ENCODE measurements at regions of chr12 and their contacts with region 1.

Region 1: DNA sequence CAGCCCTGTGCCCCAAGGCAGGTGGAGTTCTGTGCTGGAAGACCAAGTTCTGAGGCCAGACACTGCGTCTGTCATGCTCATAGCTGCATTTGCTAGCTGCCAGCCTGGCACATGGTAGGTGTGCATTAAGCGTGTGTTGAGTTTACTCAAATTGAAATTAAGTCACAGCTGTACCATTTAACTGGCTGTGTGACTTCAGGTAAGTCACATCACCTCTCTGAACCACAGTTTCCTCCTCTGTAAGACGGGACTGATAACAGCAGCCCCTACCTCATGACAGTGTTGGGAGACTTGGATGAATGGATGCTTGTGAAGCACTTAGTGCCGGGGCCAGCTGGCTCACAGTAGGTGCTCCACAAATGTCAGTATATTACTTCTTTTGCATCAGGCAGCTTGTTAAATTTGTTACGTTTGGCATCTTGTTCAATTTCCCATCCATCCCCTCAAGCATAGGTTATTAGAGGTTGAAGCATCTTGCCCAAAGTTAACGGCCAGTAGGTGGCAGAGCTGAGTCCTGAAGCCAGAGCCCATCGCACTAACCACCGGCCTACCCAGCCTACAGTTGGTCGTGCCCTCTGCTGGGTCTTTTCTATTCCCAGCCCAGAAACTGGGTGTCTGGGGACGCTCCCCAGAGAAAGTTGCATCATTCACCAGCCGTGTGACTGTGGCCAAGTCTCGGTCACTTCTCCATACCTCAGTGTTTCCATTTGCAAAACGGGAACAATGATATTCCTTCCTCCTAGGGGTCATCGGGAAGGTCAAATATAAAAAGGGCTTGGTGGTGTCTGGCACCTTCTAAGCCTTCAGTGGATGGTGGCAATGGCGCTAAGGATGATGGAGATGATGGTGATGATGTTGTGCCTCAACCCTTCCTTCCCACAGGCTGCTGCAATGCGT is 4.5 kb downstream of the DAO start:
- DNase-seq: peak; percentile 72
- CTCF ChIP-seq: peak; percentile 71

Region 2: DNA sequence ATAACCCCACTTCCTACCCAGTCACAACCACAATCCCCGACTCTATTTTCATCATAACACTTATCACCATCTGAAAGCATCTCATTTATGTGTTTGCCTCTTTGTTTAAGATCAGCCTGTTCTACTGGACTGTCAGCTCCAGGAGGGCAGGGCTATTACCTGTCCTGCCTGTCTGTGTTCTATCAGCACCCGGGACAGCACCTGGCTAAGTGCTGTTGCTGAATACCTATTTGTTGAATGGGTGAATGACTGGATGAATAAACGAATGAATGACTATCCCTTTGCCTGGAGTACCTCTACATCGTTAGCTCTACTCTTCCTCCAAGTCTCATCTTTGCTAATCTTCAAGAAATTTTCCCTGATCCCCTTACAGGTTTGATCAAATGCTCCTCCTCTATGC is 686.3 kb before region 1 on chr12:
- CTCF ChIA-PET with region 1: no interaction called
- POLR2A ChIA-PET with region 1: no interaction called
- DNase-seq: no peak
- CTCF ChIP-seq: no peak

Region 3: GRCh38 chr12:108861878-108862587 is 22.3 kb before region 1 on chr12:
- CTCF ChIA-PET with region 1: interaction called, 14 read pairs
- POLR2A ChIA-PET with region 1: no interaction called
- DNase-seq: peak; percentile 56
- CTCF ChIP-seq: no peak

Region 4: DNA sequence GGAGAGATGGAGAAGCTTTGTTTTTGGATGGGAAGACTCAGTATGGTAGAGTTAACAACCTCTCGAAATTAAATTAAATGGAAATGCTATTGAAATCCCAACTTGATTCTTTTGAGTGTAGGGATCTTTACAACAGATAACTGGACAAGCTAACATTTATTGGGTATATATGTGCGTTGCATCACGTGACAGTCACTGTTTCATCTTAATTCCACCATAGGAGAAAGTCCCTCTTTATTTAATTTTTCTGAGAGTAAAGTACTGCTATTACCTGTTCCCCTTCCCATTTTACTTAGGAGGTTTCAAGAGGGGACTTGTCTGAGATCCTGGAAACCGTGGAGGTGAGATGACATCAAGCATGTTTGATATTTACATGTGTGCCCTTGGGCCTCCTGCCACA is 15.6 kb before region 1 on chr12:
- CTCF ChIA-PET with region 1: interaction called, 10 read pairs
- POLR2A ChIA-PET with region 1: no interaction called
- DNase-seq: no peak
- CTCF ChIP-seq: no peak

Region 5: DNA sequence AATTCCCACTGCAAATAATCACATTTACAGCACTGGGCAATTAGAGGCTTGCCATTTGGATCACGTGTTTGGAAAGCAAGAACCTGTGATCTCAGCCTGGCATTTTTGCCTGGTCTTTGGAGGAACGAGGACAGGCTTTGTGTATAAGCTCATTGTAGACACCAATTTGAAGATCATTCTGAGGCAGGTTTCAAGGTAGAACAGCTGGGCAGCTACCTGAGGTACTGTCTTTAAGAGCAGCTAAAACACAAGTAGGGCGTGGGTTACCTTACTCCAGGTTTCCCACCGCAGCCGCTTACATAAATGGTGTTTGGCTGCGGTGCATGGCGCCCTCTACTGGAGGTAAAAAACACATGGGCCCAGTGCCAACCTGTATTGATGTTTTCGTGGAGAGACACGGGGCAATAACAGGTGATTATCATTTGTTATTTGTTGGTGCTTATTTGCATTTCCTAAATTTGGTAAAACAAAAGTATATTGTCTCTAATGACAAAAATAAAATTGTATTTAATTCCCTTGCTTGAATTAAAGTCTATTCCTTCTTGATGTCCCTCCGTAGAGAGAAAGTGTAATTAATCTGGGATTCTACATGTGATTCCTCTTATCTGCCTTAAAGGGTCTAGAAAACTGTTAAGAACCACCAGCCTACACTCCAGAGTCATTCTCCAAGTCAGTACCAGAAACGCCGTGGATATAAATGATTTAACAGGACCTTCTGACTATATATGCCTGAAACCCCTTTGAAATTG is 66.8 kb after region 1 on chr12:
- CTCF ChIA-PET with region 1: interaction called, 16 read pairs
- POLR2A ChIA-PET with region 1: no interaction called
- DNase-seq: peak; percentile 62
- CTCF ChIP-seq: peak; percentile 81

Measured in GM10248 (cell line).